ENCODE measurements at regions of chr7 and their contacts with region 1.

Region 1: GRCh38 chr7:13024121-13024674 is 336.8 kb downstream of the ARL4A start:
- DNase-seq: no peak
- H3K4me3 Mint-ChIP-seq: no peak overlapping the region
- H3K27ac Mint-ChIP-seq: no peak overlapping the region
- H3K4me1 Mint-ChIP-seq: no peaks in the 10 kb centered on the region
- H3K27me3 Mint-ChIP-seq: no peaks in the 10 kb centered on the region

Region 2: DNA sequence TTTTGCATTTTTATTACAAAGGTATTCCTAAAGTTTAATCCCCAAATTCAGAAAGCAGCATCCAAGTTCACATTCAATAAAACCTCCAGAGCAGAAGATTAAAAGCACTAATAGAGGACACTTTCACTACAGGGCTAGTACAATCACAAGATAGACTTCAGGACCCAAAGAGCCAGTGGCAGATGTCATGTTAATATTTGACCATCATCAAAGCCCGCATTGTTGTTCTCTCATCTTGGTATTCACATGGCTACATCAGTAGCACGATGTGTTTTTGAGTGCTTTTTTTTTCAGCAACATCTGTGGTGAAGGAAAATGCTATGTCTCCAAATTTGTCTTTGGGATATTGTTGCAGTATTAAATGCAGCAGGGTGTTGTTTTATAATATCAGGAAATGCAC is 202.5 kb before region 1 on chr7:
- intact Hi-C with region 1: no loop called
- DNase-seq: no peak
- H3K4me3 Mint-ChIP-seq: no peak overlapping the region
- H3K27ac Mint-ChIP-seq: no peak overlapping the region
- H3K4me1 Mint-ChIP-seq: no peaks in the 10 kb centered on the region
- H3K27me3 Mint-ChIP-seq: peaks cover 1% of the 10 kb centered on the region

Region 3: DNA sequence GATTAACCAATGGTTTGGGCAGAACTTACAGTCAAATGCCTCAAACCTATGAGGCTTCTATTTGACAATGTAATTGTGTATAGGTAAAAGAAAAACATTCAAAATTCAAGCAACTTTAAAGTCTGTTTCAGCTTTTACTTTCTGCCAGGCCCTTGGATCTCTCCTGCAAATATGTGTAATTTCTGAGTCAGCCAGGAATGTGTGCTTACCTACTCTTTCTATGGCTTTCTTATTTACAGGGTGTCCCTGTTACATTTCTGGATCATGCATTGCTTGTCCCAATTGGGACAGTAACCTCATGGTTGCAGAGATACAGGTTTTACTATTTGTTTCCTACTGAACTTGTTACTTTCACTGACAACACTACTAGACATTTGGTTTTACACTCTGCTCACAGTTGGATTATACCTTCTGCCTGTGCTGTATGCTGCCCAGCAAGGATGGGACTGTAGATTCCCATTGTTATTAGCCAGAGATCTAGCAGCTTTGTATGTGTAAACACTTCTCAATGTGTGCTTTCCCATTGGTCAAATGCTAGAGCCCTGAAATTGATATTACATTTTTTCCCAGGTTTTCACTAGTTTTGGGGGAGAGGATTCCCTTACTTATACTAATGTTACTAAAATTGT is 18.5 kb after region 1 on chr7:
- intact Hi-C with region 1: loop called (anchors 1 kb)
- DNase-seq: no peak
- H3K4me3 Mint-ChIP-seq: no peak overlapping the region
- H3K27ac Mint-ChIP-seq: no peak overlapping the region
- H3K4me1 Mint-ChIP-seq: no peaks in the 10 kb centered on the region
- H3K27me3 Mint-ChIP-seq: peaks cover 7% of the 10 kb centered on the region

Measured in activated T-helper 1 cell treated with anti-CD3 and anti-CD28 coated beads, Interleukin-12 subunit alpha, Interleukin-12 subunit beta, Interleukin-2, Interleukin-4 antibody, amounts not matched to agents 30 ng/mL and 10 ng/mL and 1 ng/mL, durations not matched to agents 14 hours and 24 hours and 36 hours (primary cell).